ENCODE measurements at regions of chr4 and their contacts with region 1.

Region 1: GRCh38 chr4:15655229-15656037 is at the start of gene FBXL5:
- DNase-seq: peak; percentile 66 to 95 (median 80)
- ATAC-seq: peak; percentile 79
- H3K4me3 ChIP-seq: peak within 1 kb of the TSS; percentile 67 to 85
- H3K4me3 Mint-ChIP-seq: peak within 1 kb of the TSS; percentile 98
- H3K27ac ChIP-seq: peak within 1 kb of the TSS; percentile 88 to 92
- H3K27ac Mint-ChIP-seq: peak within 1 kb of the TSS; percentile 97
- H3K4me1 ChIP-seq: peaks cover 51% of the 10 kb centered on the region
- H3K4me1 Mint-ChIP-seq: peaks cover 46% of the 10 kb centered on the region
- H3K27me3 ChIP-seq: no peaks in the 10 kb centered on the region
- H3K27me3 Mint-ChIP-seq: no peaks in the 10 kb centered on the region
- CTCF ChIP-seq: no peak
- total RNA-seq, gene FBXL5: 60.4 to 61.7 TPM

Region 2: GRCh38 chr4:15681207-15682015 is 26.0 kb after region 1 on chr4 and contains the start of gene FAM200B:
- CTCF ChIA-PET with region 1: interaction called, 4 read pairs
- POLR2A ChIA-PET with region 1: interaction called, 23 read pairs
- intact Hi-C with region 1: loop called (anchors 1 kb)
- DNase-seq: peak; percentile 92 to 98 (median 95)
- ATAC-seq: peak; percentile 96
- H3K4me3 ChIP-seq: peak within 1 kb of the TSS; percentile 82 to 87
- H3K4me3 Mint-ChIP-seq: peak within 1 kb of the TSS; percentile 93
- H3K27ac ChIP-seq: peak within 1 kb of the TSS; percentile 80 to 85
- H3K27ac Mint-ChIP-seq: peak within 1 kb of the TSS; percentile 97
- H3K4me1 ChIP-seq: peaks cover 18% of the 10 kb centered on the region
- H3K4me1 Mint-ChIP-seq: peaks cover 38% of the 10 kb centered on the region
- H3K27me3 ChIP-seq: no peaks in the 10 kb centered on the region
- H3K27me3 Mint-ChIP-seq: no peaks in the 10 kb centered on the region
- CTCF ChIP-seq: no peak
- total RNA-seq, gene FAM200B: 14.8 to 17.1 TPM

Region 3: GRCh38 chr4:17511950-17512795 is 1856.7 kb after region 1 on chr4 and contains the start of gene QDPR:
- CTCF ChIA-PET with region 1: no interaction called
- POLR2A ChIA-PET with region 1: no interaction called
- intact Hi-C with region 1: loop called in 1 of 2 experiments (anchors 5 kb)
- DNase-seq: peak; percentile 38 to 86 (median 70)
- ATAC-seq: peak; percentile 91
- H3K4me3 ChIP-seq: peak within 1 kb of the TSS; percentile 63 to 80
- H3K4me3 Mint-ChIP-seq: peak within 1 kb of the TSS; percentile 99
- H3K27ac ChIP-seq: peak within 1 kb of the TSS; percentile 49 to 57
- H3K27ac Mint-ChIP-seq: peak within 1 kb of the TSS; percentile 93
- H3K4me1 ChIP-seq: peaks cover 18% of the 10 kb centered on the region
- H3K4me1 Mint-ChIP-seq: peaks cover 33% of the 10 kb centered on the region
- H3K27me3 ChIP-seq: no peaks in the 10 kb centered on the region
- H3K27me3 Mint-ChIP-seq: peaks cover 6% of the 10 kb centered on the region
- CTCF ChIP-seq: peak; percentile 30
- total RNA-seq, gene QDPR: 10.9 to 11.6 TPM

Measured in CD8-positive, alpha-beta T cell (primary cell).